PC-9 (cell line): ENCODE measurements at regions of chr19 and their contacts with region 1.

Region 1: DNA sequence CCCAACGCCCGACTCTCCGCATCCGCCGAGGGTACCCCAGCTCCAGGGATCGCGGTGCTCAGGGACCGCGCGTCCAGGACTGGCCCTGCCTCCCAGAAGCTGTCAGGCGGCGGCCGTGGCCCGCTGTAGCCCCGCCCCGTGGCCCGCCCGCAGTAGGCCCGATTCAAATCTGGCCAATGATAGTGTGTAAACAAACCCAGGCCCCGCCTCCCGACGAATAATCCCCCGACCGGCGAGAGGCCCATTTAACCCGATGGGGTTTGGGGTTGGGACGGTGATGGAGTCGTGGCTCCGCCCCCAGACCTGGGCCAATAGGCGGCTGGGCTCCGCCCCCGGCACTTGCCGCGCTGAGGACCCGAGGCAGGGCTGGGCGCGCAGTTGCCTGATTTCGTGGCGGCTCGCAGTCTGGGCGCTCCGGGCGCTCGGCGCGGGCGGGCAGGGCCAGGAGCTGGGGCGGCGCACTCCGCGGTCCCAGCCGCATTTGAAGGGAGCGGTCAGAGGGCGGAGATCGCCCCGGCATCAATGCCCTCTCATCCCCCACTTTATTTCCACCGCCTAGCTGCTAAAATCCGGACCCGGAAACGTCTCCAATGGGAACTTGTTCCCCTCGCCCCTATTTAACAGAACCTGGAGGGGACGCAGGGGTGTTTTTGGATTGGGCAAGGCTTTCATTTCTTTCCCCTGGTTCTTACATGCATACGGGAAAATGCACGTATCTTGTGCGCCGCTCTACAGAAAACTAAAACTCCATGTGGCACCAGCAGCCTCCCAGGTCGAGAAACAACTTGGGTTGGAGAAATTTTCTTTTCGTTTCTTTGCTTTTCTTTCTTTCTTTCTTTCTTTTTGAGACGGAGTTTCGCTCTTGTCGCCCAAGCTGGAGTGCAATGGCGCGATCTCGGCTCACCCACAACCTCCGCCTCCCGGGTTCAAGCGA is 8.4 kb upstream of the BICRA start:
- DNase-seq: peak; percentile 99
- H3K4me3 ChIP-seq: peak overlapping the region; percentile 80
- H3K27ac ChIP-seq: peak overlapping the region; percentile 87
- H3K4me1 ChIP-seq: peaks cover 29% of the 10 kb centered on the region
- H3K27me3 ChIP-seq: no peaks in the 10 kb centered on the region
- CTCF ChIP-seq: no peak

Region 2: DNA sequence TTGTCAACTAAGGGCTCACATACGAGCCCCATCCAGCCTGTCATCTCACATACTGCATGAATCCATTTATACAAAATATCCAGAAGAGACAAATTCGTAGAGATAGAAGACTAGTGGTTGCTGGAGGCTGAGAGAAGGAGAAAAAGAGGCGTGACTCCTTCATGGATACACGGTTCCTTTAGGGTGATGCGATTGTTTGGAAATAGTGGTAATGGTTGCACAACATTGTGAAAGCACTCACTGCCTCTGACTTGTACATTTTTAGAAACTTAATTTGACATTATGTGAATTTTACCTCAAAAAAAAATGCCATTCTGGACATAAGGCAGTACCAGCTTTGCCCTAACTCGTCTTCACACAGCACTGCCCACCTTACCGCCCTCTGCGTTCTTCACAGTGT is 1343.7 kb before region 1 on chr19:
- CTCF ChIA-PET with region 1: no interaction called
- POLR2A ChIA-PET with region 1: interaction called, 12 read pairs
- intact Hi-C with region 1: no loop called
- DNase-seq: peak in 1 of 2 experiments; percentile 50
- H3K4me3 ChIP-seq: no peak overlapping the region
- H3K27ac ChIP-seq: peak overlapping the region; percentile 49
- H3K4me1 ChIP-seq: peaks cover 75% of the 10 kb centered on the region
- H3K27me3 ChIP-seq: no peaks in the 10 kb centered on the region
- CTCF ChIP-seq: no peak

Region 3: DNA sequence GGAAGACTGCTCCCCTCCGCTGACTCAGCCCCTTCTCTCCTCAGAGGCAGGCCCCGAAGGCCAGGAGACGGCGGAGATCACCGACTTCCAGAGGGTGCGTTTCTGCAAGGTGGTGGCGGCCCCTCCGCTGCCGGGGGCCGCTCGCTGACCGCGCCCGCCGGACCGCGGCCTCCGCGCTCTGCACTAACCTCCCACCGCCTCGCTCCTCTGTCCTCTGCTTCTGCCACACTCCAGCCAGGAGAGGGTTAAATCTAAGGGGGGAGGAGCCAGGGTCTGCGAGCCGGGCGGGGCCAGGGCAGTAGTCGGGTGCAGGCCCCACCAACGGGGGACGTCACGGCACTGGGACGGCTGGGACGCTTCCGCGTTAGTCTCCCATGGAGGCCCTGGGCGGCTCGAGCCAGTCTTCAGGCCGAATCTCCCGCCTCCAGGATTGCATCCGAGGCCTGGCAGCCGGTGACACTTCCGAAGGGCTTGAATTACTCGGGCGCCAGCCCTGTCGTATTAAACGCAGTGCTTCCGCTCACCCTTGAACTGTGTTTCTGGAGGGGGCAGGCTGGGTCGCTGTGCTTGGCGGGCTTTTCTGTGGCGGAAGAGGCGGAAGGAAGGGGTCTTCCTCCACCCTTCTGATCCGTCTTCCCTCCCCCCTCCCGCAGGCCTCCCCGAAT is 327.1 kb before region 1 on chr19:
- CTCF ChIA-PET with region 1: no interaction called
- POLR2A ChIA-PET with region 1: no interaction called
- intact Hi-C with region 1: loop called (anchors 10 kb)
- DNase-seq: peak; percentile 85 to 90
- H3K4me3 ChIP-seq: peak overlapping the region; percentile 91
- H3K27ac ChIP-seq: peak overlapping the region; percentile 96
- H3K4me1 ChIP-seq: peaks cover 6% of the 10 kb centered on the region; the same call in 1 of the 2 replicates
- H3K27me3 ChIP-seq: no peaks in the 10 kb centered on the region
- CTCF ChIP-seq: no peak

Region 4: GRCh38 chr19:47381653-47382279 is 218.7 kb before region 1 on chr19:
- CTCF ChIA-PET with region 1: no interaction called
- POLR2A ChIA-PET with region 1: no interaction called
- intact Hi-C with region 1: no loop called
- DNase-seq: no peak
- H3K4me3 ChIP-seq: no peak overlapping the region
- H3K27ac ChIP-seq: no peak overlapping the region
- H3K4me1 ChIP-seq: no peaks in the 10 kb centered on the region
- H3K27me3 ChIP-seq: no peaks in the 10 kb centered on the region
- CTCF ChIP-seq: no peak

Region 5: GRCh38 chr19:47523473-47523872 is 77.0 kb before region 1 on chr19:
- CTCF ChIA-PET with region 1: interaction called, 4 read pairs
- POLR2A ChIA-PET with region 1: interaction called, 39 read pairs
- intact Hi-C with region 1: no loop called
- DNase-seq: no peak
- H3K4me3 ChIP-seq: no peak overlapping the region
- H3K27ac ChIP-seq: no peak overlapping the region
- H3K4me1 ChIP-seq: 0 out of 2 replicates have a peak, but pooled peaks cover 4% of the 10 kb centered on the region
- H3K27me3 ChIP-seq: no peaks in the 10 kb centered on the region
- CTCF ChIP-seq: no peak

Region 6: GRCh38 chr19:47569331-47569730 is 31.2 kb before region 1 on chr19:
- CTCF ChIA-PET with region 1: no interaction called
- POLR2A ChIA-PET with region 1: no interaction called
- intact Hi-C with region 1: no loop called
- DNase-seq: no peak
- H3K4me3 ChIP-seq: no peak overlapping the region
- H3K27ac ChIP-seq: no peak overlapping the region
- H3K4me1 ChIP-seq: peaks cover 17% of the 10 kb centered on the region
- H3K27me3 ChIP-seq: no peaks in the 10 kb centered on the region
- CTCF ChIP-seq: no peak

Region 7: GRCh38 chr19:47644762-47645482 is 44.4 kb after region 1 on chr19:
- CTCF ChIA-PET with region 1: no interaction called
- POLR2A ChIA-PET with region 1: no interaction called
- intact Hi-C with region 1: loop called (anchors 2 kb)
- DNase-seq: no peak
- H3K4me3 ChIP-seq: no peak overlapping the region
- H3K27ac ChIP-seq: 0 out of 2 replicates have a peak overlapping the region, but pooled peaks have one; percentile 15
- H3K4me1 ChIP-seq: peaks cover 50% of the 10 kb centered on the region
- H3K27me3 ChIP-seq: no peaks in the 10 kb centered on the region
- CTCF ChIP-seq: no peak

Region 8: GRCh38 chr19:47658431-47659348 is 58.2 kb after region 1 on chr19:
- CTCF ChIA-PET with region 1: no interaction called
- POLR2A ChIA-PET with region 1: no interaction called
- intact Hi-C with region 1: no loop called
- DNase-seq: no peak
- H3K4me3 ChIP-seq: no peak overlapping the region
- H3K27ac ChIP-seq: peak overlapping the region; percentile 18; the same call in 1 of the 2 replicates
- H3K4me1 ChIP-seq: peaks cover 40% of the 10 kb centered on the region
- H3K27me3 ChIP-seq: no peaks in the 10 kb centered on the region
- CTCF ChIP-seq: no peak

Region 9: GRCh38 chr19:47687906-47688305 is 87.4 kb after region 1 on chr19:
- CTCF ChIA-PET with region 1: no interaction called
- POLR2A ChIA-PET with region 1: no interaction called
- intact Hi-C with region 1: no loop called
- DNase-seq: no peak
- H3K4me3 ChIP-seq: no peak overlapping the region
- H3K27ac ChIP-seq: no peak overlapping the region
- H3K4me1 ChIP-seq: no peaks in the 10 kb centered on the region
- H3K27me3 ChIP-seq: no peaks in the 10 kb centered on the region
- CTCF ChIP-seq: no peak

Region 10: DNA sequence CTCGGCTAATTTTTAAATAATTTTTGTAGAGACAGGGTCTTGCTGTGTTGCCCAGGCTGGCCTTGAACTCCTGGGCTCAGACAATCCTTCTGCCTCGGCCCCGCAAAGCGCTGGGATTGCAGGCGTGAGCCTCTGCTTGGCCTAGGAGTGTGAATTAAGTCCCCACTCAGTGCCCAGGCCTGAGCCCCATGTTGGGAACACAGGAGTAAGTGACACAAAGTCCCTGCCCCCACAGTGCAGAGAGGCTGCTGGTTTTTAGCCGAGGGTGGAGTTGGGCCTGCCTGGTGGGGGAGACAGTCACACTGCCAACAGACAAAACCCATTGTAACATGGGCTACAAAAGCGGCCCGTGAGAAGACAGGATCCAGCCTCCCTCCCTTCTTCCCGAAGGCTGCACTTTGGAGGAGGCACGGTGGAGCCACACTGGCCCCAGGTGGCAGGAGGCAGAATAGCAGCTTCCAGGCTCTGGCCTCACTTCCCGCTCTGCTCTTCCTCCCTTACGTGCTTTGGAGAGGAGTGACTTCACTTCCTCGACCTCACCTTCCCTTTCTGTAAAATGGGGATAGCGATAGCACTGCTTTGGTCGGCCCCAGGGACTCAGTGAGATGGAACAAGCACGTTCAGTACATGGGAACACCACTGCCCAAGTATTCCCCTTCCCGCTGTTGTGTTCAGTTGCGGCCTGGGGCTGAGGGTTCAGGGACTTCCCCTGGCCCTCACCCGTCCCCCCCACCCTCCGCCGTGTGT is 97.5 kb after region 1 on chr19:
- CTCF ChIA-PET with region 1: no interaction called
- POLR2A ChIA-PET with region 1: no interaction called
- intact Hi-C with region 1: loop called (anchors 2 kb)
- DNase-seq: peak; percentile 70 to 78
- H3K4me3 ChIP-seq: no peak overlapping the region
- H3K27ac ChIP-seq: 0 out of 2 replicates have a peak overlapping the region, but pooled peaks have one; percentile 27
- H3K4me1 ChIP-seq: no peaks in the 10 kb centered on the region
- H3K27me3 ChIP-seq: no peaks in the 10 kb centered on the region
- CTCF ChIP-seq: peak; percentile 99

Region 11: DNA sequence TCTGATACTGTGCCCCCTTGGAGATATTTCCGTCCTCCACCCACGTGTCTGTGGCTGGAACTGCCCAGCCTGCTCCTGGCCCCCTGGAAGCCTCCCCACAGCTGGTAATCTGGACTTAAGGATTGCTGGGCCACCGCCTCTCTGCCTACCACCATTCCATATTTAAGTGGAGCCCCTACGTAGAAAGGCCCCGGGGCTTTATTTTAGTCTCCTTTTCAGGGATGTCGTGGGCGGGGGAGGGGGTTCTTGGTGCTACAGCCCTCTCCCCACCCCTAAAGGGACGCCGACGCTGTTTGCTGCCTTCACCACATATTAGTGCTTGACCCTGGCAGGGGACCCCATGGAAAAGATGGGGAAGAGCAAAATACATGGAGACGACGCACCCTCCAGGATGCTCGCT is 142.1 kb after region 1 on chr19:
- CTCF ChIA-PET with region 1: no interaction called
- POLR2A ChIA-PET with region 1: interaction called, 13 read pairs
- intact Hi-C with region 1: no loop called
- DNase-seq: no peak
- H3K4me3 ChIP-seq: no peak overlapping the region
- H3K27ac ChIP-seq: peak overlapping the region; percentile 73
- H3K4me1 ChIP-seq: peaks cover 29% of the 10 kb centered on the region
- H3K27me3 ChIP-seq: no peaks in the 10 kb centered on the region
- CTCF ChIP-seq: no peak